OCI-LY7 (cell line): ENCODE measurements at regions of chr3 and their contacts with region 1.

Region 1: DNA sequence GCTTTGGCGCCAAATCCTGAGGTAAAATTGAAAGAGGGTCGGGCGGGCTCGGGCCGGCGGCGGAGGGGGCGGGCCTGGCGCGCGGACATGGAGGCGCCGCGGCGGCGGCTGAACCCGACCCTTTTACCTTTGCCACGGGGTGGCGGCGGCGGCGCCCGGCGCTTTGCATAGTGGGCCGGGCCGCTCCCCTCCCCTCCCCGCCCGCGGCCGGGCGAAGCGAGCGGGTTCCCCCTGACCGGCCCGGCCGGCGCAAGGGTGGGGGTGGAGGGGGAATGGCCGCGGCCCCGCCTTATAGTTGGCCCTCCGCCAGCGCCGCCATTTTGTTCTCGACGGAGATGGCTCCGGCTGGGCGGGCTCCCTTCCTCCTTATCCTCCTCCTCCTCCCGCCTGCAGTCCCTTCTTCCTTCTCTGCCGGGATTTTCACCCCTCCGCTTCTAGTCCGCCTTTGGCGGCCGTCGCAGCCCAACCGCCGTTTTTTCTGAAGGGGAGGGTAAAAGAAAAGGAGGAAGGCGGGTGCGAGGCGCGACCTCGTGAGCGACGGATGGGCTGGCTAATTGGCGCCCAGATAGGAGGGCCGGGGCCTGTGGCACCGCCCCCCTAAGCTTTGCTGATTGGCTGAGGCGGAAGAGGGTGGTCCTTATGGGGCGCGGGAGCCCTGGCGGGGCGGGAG is 638 bp downstream of the NR2C2 start:
- DNase-seq: peak; percentile 97
- H3K4me3 ChIP-seq: peak overlapping the region; percentile 81
- H3K27ac ChIP-seq: peak overlapping the region; percentile 83
- H3K4me1 ChIP-seq: peaks cover 30% of the 10 kb centered on the region
- CTCF ChIP-seq: no peak

Region 2: DNA sequence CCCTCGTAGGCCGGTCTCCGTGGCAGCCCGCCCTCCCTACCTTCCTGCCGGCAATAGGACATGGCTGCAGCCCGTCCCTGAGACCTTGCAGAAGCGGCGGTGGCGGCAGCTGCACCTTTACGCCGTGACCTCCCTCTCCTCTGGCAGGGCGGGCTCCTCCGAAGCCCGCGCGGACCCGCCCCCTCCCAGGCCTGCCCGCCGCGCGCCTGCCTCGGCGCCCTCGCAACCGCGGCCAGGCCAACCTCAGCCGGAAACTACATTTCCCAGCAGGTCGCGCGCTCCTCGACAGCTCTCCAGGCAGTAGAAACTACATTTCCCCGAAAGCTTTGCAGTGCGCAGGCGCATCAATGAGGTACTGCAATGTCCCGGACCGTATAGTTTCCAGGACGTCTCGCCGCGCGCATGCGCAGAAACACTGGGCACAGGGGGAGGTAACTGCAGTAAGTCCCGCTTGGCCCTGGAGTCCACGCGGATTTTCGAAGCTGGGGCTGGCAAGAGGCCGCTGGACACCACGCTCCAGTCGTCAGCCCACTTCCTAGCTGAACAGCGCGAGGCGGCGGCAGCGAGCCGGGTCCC is 823.3 kb before region 1 on chr3 and contains the starts of genes CHCHD4 and TMEM43:
- CTCF ChIA-PET with region 1: no interaction called
- POLR2A ChIA-PET with region 1: no interaction called
- intact Hi-C with region 1: loop called (anchors 5 kb)
- DNase-seq: peak; percentile 99
- H3K4me3 ChIP-seq: peak within 1 kb of the TSS; percentile 93
- H3K27ac ChIP-seq: peak within 1 kb of the TSS; percentile 69
- H3K4me1 ChIP-seq: peaks cover 31% of the 10 kb centered on the region
- CTCF ChIP-seq: no peak
- total RNA-seq, gene CHCHD4: 19.8 and 24.7 TPM in 2 replicates
- total RNA-seq, gene TMEM43: 22.2 and 23.3 TPM in 2 replicates

Region 3: GRCh38 chr3:14178247-14179113 is 769.5 kb before region 1 on chr3 and contains the starts of genes LSM3 and XPC:
- CTCF ChIA-PET with region 1: no interaction called
- POLR2A ChIA-PET with region 1: no interaction called
- intact Hi-C with region 1: loop called (anchors 5 kb)
- DNase-seq: peak; percentile 99
- H3K4me3 ChIP-seq: peak within 1 kb of the TSS; percentile 91
- H3K27ac ChIP-seq: peak within 1 kb of the TSS; percentile 52
- H3K4me1 ChIP-seq: peaks cover 53% of the 10 kb centered on the region
- CTCF ChIP-seq: no peak
- total RNA-seq, gene LSM3: 12.4 and 15.6 TPM in 2 replicates
- total RNA-seq, gene XPC: 22.7 and 30.2 TPM in 2 replicates

Region 4: DNA sequence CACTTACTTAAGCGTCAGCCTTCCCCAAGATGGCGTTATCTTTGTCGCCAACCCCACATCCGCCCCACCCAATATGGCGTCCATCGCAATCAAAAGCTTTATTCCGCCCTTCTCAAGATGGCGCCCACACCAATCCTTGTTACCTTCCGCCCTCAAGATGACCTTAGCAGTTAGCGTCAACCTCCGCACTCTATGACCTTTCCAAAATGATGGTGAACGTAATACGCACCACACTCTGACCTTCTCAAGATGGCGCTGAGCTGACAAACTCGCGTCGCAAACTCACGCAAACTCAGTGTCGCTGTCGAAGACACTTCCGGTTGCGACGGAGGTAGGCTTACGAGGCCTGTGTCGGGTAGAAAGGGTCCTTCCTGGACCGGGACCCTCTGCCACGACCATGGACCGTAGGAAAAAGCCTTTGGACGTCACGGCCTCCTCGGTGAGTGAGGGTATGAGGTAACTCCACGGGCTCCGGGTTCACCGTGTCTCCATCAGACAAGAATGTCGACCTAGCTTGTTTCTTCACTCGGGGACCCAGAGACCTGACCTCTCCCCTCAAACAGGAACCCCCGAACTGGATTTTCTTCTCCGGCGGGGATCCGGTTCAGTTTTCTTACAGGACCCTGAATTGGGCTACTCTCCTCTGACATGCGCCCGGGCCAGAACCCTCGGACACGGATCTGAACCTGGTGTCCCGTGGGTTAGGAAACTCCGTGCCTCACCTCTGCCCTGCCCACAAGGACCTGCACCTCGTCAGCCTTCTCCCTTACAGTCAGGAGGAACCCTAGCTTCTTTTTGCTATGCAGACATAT is 296.4 kb before region 1 on chr3 and contains the start of gene CCDC174:
- CTCF ChIA-PET with region 1: no interaction called
- POLR2A ChIA-PET with region 1: interaction called, 10 read pairs
- intact Hi-C with region 1: no loop called
- DNase-seq: peak; percentile 100
- H3K4me3 ChIP-seq: peak within 1 kb of the TSS; percentile 92
- H3K27ac ChIP-seq: peak within 1 kb of the TSS; percentile 29
- H3K4me1 ChIP-seq: peaks cover 21% of the 10 kb centered on the region
- CTCF ChIP-seq: no peak
- total RNA-seq, gene CCDC174: 11.2 and 34.9 TPM in 2 replicates

Region 5: GRCh38 chr3:15051531-15051930 is 103.5 kb after region 1 on chr3:
- CTCF ChIA-PET with region 1: interaction called, 3 read pairs
- POLR2A ChIA-PET with region 1: interaction called, 3 read pairs
- intact Hi-C with region 1: loop called (anchors 1 kb)
- DNase-seq: peak; percentile 78
- H3K4me3 ChIP-seq: peak overlapping the region; percentile 22
- H3K27ac ChIP-seq: peak overlapping the region; percentile 93
- H3K4me1 ChIP-seq: peaks cover 77% of the 10 kb centered on the region
- CTCF ChIP-seq: peak; percentile 86

Region 6: DNA sequence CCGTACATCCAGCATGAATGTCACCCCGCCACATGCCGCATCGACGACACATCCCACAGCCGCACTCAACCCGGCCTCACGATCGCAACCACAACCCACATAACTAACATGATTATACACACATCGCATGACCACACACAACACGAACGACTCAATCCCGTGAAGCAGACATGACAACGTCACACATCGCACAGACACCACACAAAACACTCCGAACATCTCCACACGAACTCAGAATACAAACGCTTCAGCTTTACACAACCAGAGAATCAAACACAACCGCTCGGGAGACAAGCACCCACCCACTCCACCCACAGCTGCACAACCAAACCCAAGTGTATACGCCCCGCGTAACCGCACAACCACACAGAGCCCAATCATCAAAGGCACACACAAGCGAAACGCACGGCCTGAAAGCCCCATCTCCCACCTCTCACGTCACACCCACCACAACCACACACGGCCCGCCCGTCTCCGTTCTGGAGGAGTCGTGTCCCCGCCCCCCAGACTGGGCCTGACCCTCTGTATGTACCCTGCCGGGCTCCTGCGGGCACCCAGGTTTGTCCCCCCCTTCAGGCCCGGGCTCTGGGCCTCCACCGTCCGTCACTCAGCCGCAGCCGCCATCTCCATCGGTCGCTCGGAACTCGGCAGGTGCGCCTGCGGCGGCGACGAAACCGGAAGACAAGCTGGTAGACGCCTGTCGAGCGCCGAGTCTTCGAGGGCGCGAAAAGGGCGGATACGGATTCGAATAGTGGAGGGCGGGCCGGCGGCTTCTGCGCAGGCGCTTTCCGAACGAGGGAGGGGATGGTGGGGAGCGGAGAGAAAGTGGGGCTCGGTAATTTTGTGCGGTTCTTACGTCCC is 150.7 kb after region 1 on chr3 and contains the start of gene RBSN:
- CTCF ChIA-PET with region 1: no interaction called
- POLR2A ChIA-PET with region 1: no interaction called
- intact Hi-C with region 1: loop called (anchors 5 kb)
- DNase-seq: peak; percentile 97
- H3K4me3 ChIP-seq: peak within 1 kb of the TSS; percentile 88
- H3K27ac ChIP-seq: peak within 1 kb of the TSS; percentile 39
- H3K4me1 ChIP-seq: peaks cover 16% of the 10 kb centered on the region
- CTCF ChIP-seq: no peak
- total RNA-seq, gene RBSN: 13.3 and 20.6 TPM in 2 replicates

Region 7: DNA sequence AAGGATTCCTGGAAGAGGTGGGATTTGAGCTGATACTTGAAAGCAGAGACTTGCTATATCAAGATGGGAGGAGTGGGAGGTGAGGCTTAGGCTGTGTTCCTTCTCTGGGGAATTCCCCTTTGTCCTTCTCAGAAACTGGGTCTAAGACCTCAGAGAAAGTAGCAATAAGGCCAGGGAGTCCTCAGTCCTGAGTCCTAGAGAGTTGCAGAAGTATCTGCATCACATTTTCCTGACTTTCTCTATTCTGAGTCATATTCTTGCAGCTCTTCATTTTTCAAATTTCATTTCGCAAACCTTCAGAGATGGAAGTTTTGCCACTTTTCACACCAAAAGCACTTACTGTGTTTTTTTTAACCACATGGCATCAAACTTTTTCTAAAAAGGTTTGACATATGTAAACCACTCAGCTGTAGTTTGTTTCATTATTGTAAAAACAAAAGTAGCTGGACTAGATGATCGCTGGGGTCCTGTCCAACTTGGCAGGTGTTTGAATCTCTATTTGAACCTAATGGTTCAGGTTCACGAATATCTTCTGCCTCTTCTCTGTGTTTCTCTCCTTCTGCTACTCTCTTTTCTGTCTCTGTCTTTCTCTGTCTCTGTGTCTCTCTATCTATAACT is 552.2 kb after region 1 on chr3:
- CTCF ChIA-PET with region 1: no interaction called
- POLR2A ChIA-PET with region 1: no interaction called
- intact Hi-C with region 1: no loop called
- DNase-seq: no peak
- H3K4me3 ChIP-seq: no peak overlapping the region
- H3K27ac ChIP-seq: no peak overlapping the region
- H3K4me1 ChIP-seq: no peaks in the 10 kb centered on the region
- CTCF ChIP-seq: no peak